Activated T-helper 2 cell treated with anti-CD3 and anti-CD28 coated beads, Interferon-gamma antibody, Interleukin-2, Interleukin-4, amounts not matched to agents 10 μg/mL and 5 μg/mL and 100 μg/mL, durations not matched to agents 14 hours and 24 hours and 36 hours (primary cell): ENCODE measurements at regions of chr17 and their contacts with region 1.

Region 1: DNA sequence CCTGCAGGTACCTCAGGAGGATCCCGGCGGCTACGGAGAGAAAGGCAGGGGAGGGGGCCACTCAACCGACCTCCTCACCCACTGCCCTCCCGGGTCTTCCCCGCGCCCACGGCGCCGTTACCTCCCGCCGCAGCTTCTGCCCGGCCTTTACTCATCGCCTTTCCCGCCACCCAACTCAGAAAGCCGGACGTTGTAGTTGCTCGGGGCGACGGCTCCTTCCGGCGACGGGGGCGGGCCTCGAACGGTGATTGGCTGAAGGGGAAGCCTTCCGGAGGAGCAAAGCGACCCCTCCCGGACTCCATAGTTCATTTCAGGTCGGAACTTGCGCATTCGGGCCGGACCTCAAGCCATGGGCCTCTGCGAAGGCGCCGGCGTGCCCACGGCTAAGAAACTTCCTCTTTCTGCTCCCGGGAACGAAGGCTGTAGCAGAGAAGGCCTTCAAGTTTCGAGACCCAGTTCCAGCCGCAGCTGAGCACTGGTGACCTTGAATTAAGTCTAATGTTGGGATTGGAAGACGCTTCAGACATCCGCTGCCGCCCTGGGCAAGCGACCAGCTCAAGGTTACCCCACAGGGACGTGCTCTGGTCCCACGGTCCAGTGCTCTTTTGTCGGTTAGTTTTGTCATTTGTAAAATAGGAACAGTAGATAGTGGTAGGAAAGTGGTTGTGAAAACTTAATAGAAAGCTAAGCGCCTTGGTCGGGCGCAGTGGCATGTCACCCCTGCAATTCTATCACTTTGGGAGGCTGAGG is at the start of gene PSMC3IP:
- DNase-seq: peak; percentile 92
- H3K4me3 Mint-ChIP-seq: peak within 1 kb of the TSS; percentile 97
- H3K27ac Mint-ChIP-seq: peak within 1 kb of the TSS; percentile 96
- H3K4me1 Mint-ChIP-seq: peaks cover 20% of the 10 kb centered on the region
- H3K27me3 Mint-ChIP-seq: no peaks in the 10 kb centered on the region
- total RNA-seq, gene PSMC3IP: 23.3 and 26.6 TPM in 2 replicates

Region 2: GRCh38 chr17:42554250-42555121 is 23.2 kb before region 1 on chr17:
- intact Hi-C with region 1: no loop called
- DNase-seq: peak; percentile 77
- H3K4me3 Mint-ChIP-seq: peak overlapping the region; percentile 93
- H3K27ac Mint-ChIP-seq: peak overlapping the region; percentile 91
- H3K4me1 Mint-ChIP-seq: peaks cover 13% of the 10 kb centered on the region
- H3K27me3 Mint-ChIP-seq: no peaks in the 10 kb centered on the region

Region 3: DNA sequence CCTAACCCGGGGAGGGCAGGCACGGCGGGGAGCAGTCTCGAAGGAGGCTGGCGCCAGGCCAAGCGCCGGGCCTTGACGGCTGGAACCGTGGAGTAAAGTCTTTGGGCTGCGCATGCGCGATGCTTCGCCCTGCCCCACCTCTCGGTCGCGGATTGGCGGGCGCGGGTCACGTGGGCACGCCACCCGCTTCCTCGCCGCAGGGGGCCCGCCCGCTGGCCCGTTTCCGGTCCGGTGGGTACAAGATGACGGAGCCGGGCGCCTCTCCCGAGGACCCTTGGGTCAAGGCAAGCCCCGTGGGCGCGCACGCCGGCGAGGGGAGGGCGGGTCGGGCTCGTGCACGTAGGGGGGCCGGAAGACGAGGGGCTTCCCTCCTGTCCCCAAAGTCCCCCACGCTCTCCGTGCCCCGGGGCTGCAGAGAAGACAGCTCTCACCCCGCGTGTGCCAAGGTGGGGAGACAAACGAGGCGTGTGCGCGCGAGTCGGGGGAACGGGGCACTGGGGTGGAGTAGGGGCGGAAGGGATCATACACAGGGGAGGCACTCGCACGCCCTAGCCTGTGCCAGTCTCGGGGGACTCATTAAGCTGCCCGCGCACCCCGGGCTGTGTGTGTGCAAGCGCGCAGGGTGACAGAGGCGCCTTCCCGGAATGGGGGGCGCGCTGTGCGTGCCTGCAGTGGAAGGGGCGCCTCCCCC is 10.7 kb before region 1 on chr17 and contains the start of gene MLX:
- intact Hi-C with region 1: loop called (anchors 1 kb)
- DNase-seq: peak; percentile 89
- H3K4me3 Mint-ChIP-seq: peak within 1 kb of the TSS; percentile 86
- H3K27ac Mint-ChIP-seq: peak within 1 kb of the TSS; percentile 80
- H3K4me1 Mint-ChIP-seq: peaks cover 33% of the 10 kb centered on the region
- H3K27me3 Mint-ChIP-seq: no peaks in the 10 kb centered on the region
- total RNA-seq, gene MLX: 54.8 and 60.0 TPM in 2 replicates

Region 4: DNA sequence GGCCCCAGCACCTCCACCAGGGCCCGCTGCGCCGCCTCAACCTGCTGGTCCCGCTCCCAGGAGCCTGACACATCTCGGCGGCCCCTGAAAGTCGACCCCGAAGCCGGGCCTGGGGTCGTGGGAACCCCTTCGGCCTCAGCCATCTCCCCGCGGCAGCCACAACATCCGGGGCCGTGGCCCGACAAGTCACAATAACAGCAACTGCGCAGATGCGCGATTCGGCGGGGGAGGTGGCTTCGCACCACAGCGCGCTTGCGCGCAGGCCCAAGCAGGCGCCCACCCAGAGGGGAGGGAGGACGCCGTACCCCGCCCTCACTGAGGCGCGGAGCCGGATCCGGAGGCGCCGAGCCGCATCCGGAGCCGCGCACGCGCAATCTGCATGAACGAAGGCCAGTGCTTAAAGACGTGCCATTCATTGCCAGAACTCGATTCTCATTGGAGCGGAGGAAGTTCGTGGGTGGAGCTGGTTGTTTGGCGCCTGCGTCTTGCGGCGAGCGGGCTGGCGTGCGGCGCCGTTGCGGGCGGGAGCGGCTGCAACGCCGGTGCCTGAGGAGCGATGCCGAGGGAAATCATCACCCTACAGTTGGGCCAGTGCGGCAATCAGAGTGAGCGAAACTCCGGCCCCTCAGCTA is 31.6 kb after region 1 on chr17 and contains the starts of genes RETREG3 and TUBG1:
- intact Hi-C with region 1: loop called (anchors 1 kb)
- DNase-seq: peak; percentile 100
- H3K4me3 Mint-ChIP-seq: peak within 1 kb of the TSS; percentile 98
- H3K27ac Mint-ChIP-seq: peak within 1 kb of the TSS; percentile 92
- H3K4me1 Mint-ChIP-seq: peaks cover 19% of the 10 kb centered on the region
- H3K27me3 Mint-ChIP-seq: no peaks in the 10 kb centered on the region
- total RNA-seq, gene RETREG3: 37.7 and 39.0 TPM in 2 replicates
- total RNA-seq, gene TUBG1: 85.5 and 94.9 TPM in 2 replicates

Region 5: GRCh38 chr17:42677008-42677857 is 99.5 kb after region 1 on chr17:
- intact Hi-C with region 1: loop called (anchors 5 kb)
- DNase-seq: peak; percentile 96
- H3K4me3 Mint-ChIP-seq: peak overlapping the region; percentile 87
- H3K27ac Mint-ChIP-seq: peak overlapping the region; percentile 76
- H3K4me1 Mint-ChIP-seq: peaks cover 41% of the 10 kb centered on the region
- H3K27me3 Mint-ChIP-seq: peaks cover 42% of the 10 kb centered on the region

Region 6: GRCh38 chr17:42760652-42761581 is 183.2 kb after region 1 on chr17 and contains the start of gene RAMP2:
- intact Hi-C with region 1: loop called (anchors 5 kb)
- DNase-seq: no peak
- H3K4me3 Mint-ChIP-seq: peak within 1 kb of the TSS; percentile 22
- H3K27ac Mint-ChIP-seq: no peak within 1 kb of the TSS
- H3K4me1 Mint-ChIP-seq: peaks cover 5% of the 10 kb centered on the region
- H3K27me3 Mint-ChIP-seq: peaks cover 56% of the 10 kb centered on the region
- total RNA-seq, gene RAMP2: not detected in 2 replicates

Region 7: GRCh38 chr17:42997984-42998938 is 420.6 kb after region 1 on chr17 and contains the start of gene RPL27:
- intact Hi-C with region 1: loop called (anchors 10 kb)
- DNase-seq: peak; percentile 97
- H3K4me3 Mint-ChIP-seq: peak within 1 kb of the TSS; percentile 93
- H3K27ac Mint-ChIP-seq: peak within 1 kb of the TSS; percentile 97
- H3K4me1 Mint-ChIP-seq: peaks cover 22% of the 10 kb centered on the region
- H3K27me3 Mint-ChIP-seq: no peaks in the 10 kb centered on the region
- total RNA-seq, gene RPL27: 1,137 and 1,172 TPM in 2 replicates